Endothelial cell of umbilical vein (primary cell): ENCODE measurements at regions of chr3 and their contacts with region 1.

Region 1: DNA sequence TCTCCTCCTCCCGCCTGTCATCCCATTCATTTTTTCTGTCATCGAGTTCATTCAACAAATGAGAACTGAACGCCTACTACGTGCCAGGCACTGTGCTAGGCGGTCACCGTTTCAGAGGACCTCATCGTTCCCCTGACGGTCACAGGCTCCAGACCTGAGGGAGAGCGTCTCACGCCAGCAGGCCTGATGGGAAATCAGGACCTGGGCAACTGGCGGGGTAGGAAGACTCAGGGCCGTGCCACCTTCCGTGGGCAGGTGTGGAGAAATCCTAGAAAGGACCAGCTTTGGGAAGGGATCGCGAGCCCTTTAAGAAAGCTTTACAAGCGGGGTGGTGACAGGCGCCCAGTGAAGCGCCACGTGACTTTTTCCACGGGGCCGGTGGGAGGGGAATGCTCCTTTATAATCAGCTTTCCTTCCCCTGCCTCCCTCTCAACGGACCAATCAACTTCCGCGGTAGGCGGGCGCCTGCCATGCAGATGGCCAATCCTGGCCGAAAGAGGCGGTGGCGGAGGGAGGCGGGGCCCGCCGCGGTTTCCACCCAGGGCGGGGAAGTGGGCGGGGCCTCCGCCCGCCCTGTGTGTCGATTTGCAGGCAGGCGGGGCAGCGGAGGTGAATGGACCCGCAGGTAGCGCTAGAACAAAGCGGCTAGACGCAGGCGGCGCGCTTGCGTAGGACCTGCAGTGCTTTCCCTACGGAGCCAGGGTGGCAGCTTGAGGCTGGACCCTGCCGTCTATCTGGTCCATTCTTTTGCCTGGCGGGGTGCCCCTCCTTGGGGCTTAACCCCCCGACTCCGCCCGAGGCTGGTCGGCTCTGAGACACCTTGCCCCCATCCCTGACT is 816 bp upstream of the DUSP7 start:
- DNase-seq: peak; percentile 99
- H3K4me3 ChIP-seq: peak overlapping the region; percentile 38 to 78 (median 39)
- H3K27ac ChIP-seq: peak overlapping the region; percentile 23
- H3K4me1 ChIP-seq: peaks cover 34% of the 10 kb centered on the region
- H3K27me3 ChIP-seq: no peaks in the 10 kb centered on the region
- CTCF ChIP-seq: no peak
- POLR2A ChIP-seq: peak; percentile 29

Region 2: DNA sequence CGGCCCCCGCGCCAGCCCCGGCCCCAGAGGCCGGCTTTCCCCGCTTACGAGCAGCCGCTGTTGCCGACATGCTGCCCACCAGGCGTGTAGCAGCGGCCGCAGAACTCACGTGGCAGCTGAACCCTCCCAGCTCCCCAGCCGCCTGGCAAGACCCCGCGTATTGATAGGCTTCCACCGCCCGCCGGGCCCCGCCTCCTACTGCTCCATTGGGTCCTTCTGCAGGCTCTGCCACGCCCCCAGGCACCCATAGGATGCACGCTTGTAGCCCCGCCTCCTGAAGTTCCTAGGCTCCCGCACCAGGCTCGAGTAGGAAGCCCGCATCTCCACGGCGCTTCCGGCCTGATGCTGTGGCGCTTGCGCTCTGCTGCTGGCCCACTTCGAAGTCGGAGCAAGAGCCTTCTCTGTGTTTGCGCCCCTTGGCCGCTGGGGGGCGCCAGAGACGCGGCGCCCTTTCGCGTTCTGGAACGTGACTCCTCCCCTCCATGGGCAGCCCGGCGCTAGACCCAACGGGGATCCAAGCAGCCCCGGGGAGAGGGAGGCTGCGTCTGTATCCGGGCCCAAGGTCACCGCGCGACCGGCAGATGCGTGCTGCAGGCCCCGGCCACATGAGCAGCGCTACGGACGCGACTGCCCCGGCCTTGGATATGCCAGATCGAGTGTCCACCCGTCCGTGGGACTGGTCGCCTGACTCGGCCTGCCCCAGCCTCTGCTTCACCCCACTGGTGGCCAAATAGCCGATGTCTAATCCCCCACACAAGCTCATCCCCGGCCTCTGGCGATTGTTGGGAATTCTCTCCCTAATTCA is 115.2 kb before region 1 on chr3 and contains the starts of genes PARP3 and RRP9:
- CTCF ChIA-PET with region 1: interaction called, 4 read pairs
- POLR2A ChIA-PET with region 1: no interaction called
- dilution Hi-C with region 1: no loop called
- intact Hi-C with region 1: loop called (anchors 1 kb)
- DNase-seq: peak; percentile 100
- H3K4me3 ChIP-seq: peak within 1 kb of the TSS; percentile 66 to 81 (median 79)
- H3K27ac ChIP-seq: peak within 1 kb of the TSS; percentile 80
- H3K4me1 ChIP-seq: peaks cover 21% of the 10 kb centered on the region
- H3K27me3 ChIP-seq: no peaks in the 10 kb centered on the region
- CTCF ChIP-seq: peak; percentile 100
- POLR2A ChIP-seq: peak; percentile 73
- total RNA-seq, gene PARP3: 10.0 and 11.0 TPM in 2 replicates
- total RNA-seq, gene RRP9: 23.8 and 30.1 TPM in 2 replicates

Region 3: DNA sequence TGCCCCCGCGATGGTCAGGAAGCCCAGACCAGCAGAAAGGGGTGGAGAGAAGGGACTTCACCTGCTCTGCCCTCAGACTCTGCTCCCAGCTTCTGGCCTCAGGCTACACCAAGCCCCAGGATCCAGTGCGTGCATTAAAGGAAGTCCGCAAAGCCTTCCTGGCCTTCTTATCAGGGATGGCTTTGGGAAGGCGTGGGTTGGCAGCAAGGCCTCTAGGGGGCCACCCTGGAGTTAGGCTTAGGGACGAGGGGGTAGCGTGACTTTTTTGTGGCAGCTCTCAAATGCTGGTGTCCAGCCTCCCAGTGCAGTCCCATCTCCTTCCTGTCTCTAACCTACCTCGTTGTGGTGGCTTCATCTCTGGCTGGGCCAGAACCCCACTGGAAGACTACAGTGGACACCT is 42.6 kb before region 1 on chr3:
- CTCF ChIA-PET with region 1: interaction called, 260 read pairs
- POLR2A ChIA-PET with region 1: interaction called, 3 read pairs
- dilution Hi-C with region 1: no loop called
- intact Hi-C with region 1: loop called (anchors 2 kb)
- DNase-seq: no peak
- H3K4me3 ChIP-seq: no peak overlapping the region
- H3K27ac ChIP-seq: no peak overlapping the region
- H3K4me1 ChIP-seq: peaks cover 11% of the 10 kb centered on the region
- H3K27me3 ChIP-seq: no peaks in the 10 kb centered on the region
- CTCF ChIP-seq: peak; percentile 33 to 39
- POLR2A ChIP-seq: no peak

Region 4: DNA sequence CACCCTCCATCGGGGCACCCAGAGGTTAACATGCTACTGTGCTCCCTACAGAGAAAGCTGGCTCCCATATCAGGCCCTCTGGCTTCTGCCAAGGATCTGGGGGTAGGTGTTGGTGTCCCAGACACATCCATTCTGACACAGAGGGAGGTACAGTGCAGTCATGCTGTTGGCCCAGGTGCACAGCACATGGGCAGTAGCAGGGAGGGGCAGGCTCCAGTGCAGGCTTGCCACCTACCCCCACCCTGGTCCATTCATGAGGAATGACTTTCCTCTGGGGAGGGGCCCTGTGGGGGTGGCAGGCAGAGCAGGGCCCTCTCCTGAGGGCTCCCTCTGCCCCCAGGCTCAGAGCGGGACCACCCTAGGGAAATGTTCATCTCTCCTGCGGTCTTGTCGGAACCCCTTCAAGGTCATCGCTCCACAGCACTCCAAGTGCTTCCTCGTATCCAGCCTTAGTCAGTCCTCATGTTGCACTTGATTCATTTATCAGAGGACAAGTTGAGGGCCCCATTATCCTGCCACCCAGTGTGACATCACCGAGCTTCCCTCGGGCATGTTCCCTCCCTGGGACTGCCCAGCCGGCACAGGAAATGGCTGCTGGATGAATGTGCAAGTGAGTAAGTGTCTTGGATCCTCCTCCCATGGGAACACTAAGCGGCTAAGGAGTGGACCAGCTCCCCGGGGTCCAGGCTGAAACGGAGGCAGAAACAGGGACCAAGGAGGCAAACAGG is 10.8 kb before region 1 on chr3:
- CTCF ChIA-PET with region 1: interaction called, 43 read pairs
- POLR2A ChIA-PET with region 1: interaction called, 8 read pairs
- dilution Hi-C with region 1: no loop called
- intact Hi-C with region 1: loop called (anchors 1 kb)
- DNase-seq: peak; percentile 96
- H3K4me3 ChIP-seq: no peak overlapping the region
- H3K27ac ChIP-seq: peak overlapping the region; percentile 86
- H3K4me1 ChIP-seq: peaks cover 28% of the 10 kb centered on the region
- H3K27me3 ChIP-seq: no peaks in the 10 kb centered on the region
- CTCF ChIP-seq: no peak
- POLR2A ChIP-seq: peak; percentile 75

Region 5: GRCh38 chr3:52108302-52109232 is 51.4 kb after region 1 on chr3:
- CTCF ChIA-PET with region 1: interaction called, 12 read pairs
- POLR2A ChIA-PET with region 1: no interaction called
- dilution Hi-C with region 1: no loop called
- intact Hi-C with region 1: no loop called
- DNase-seq: no peak
- H3K4me3 ChIP-seq: no peak overlapping the region
- H3K27ac ChIP-seq: no peak overlapping the region
- H3K4me1 ChIP-seq: peaks cover 3% of the 10 kb centered on the region
- H3K27me3 ChIP-seq: no peaks in the 10 kb centered on the region
- CTCF ChIP-seq: no peak
- POLR2A ChIP-seq: no peak

Region 6: DNA sequence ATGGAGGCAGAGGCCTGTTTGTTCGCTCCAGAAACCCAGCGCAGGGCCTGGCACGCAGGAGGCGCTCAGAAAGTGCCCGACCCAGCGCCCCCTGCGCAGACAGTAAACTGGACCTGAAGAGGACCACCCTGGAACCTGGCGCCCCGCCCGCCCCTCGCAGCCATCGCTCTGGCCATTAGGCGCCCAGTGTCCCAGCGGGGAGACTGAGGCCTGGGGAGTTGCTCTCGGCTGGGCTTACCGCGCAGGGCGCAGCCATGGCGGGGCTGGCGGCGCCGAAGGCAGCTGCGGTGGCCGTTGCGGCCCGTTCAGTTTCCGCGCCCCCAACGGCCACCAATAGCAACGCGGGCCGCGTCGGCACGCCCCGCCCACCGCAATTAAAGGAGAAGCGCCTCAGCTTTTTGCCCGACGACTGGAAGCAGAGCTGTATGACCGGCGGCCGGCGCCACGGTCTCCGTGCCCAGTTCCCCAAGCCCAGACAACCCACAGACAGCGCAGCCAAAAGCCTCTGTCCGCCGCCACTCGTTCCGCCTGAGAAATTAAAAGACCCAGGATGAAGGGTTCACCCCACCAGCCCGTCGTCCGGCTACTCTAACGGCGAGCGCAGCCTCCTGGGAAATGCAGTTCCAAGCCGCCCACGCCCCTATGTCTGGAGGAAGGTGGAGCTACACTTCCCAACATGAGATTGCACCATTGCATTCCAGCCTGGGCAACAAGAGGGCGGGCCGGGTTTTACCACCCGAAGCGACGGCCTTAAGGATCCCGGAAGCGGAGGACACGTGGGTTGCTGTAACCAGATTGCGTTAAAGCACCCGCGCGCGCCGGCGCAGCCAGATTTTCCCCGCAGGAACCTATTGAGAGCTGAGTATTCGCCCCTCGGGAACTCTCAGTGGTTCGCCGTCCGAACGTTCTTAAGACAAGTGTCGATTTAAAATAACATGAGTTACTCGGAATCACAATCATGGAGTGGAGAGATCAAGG is 97.2 kb after region 1 on chr3 and contains the start of gene POC1A:
- CTCF ChIA-PET with region 1: interaction called, 15 read pairs
- POLR2A ChIA-PET with region 1: interaction called, 3 read pairs
- dilution Hi-C with region 1: no loop called
- intact Hi-C with region 1: no loop called
- DNase-seq: peak; percentile 97
- H3K4me3 ChIP-seq: peak within 1 kb of the TSS; percentile 64 to 69 (median 65)
- H3K27ac ChIP-seq: peak within 1 kb of the TSS; percentile 58
- H3K4me1 ChIP-seq: peaks cover 14% of the 10 kb centered on the region
- H3K27me3 ChIP-seq: no peaks in the 10 kb centered on the region
- CTCF ChIP-seq: no peak
- POLR2A ChIP-seq: peak; percentile 64
- total RNA-seq, gene POC1A: 16.7 and 19.4 TPM in 2 replicates

Region 7: GRCh38 chr3:52655895-52656294 is 598.7 kb after region 1 on chr3:
- CTCF ChIA-PET with region 1: no interaction called
- POLR2A ChIA-PET with region 1: no interaction called
- dilution Hi-C with region 1: no loop called
- intact Hi-C with region 1: no loop called
- DNase-seq: no peak
- H3K4me3 ChIP-seq: no peak overlapping the region
- H3K27ac ChIP-seq: no peak overlapping the region
- H3K4me1 ChIP-seq: no peaks in the 10 kb centered on the region
- H3K27me3 ChIP-seq: no peaks in the 10 kb centered on the region
- CTCF ChIP-seq: no peak
- POLR2A ChIP-seq: no peak